Psoas muscle (tissue), 8 donors: ENCODE measurements at regions of chr19 and their contacts with region 1.

Region 1: GRCh38 chr19:35352448-35353304 is 5.0 kb downstream of the FFAR1 start:
- DNase-seq: peak in 1 of 2 donors; percentile 46
- ATAC-seq: peak in 2 of 4 donors; percentile 34 to 63
- H3K4me3 ChIP-seq: no peak overlapping the region
- H3K27ac ChIP-seq: no peak overlapping the region
- H3K4me1 ChIP-seq: no peaks in the 10 kb centered on the region
- H3K27me3 ChIP-seq: peaks cover 0 to 53% (median 6%) of the 10 kb centered on the region in 3 donors
- CTCF ChIP-seq: peak; percentile 55

Region 2: DNA sequence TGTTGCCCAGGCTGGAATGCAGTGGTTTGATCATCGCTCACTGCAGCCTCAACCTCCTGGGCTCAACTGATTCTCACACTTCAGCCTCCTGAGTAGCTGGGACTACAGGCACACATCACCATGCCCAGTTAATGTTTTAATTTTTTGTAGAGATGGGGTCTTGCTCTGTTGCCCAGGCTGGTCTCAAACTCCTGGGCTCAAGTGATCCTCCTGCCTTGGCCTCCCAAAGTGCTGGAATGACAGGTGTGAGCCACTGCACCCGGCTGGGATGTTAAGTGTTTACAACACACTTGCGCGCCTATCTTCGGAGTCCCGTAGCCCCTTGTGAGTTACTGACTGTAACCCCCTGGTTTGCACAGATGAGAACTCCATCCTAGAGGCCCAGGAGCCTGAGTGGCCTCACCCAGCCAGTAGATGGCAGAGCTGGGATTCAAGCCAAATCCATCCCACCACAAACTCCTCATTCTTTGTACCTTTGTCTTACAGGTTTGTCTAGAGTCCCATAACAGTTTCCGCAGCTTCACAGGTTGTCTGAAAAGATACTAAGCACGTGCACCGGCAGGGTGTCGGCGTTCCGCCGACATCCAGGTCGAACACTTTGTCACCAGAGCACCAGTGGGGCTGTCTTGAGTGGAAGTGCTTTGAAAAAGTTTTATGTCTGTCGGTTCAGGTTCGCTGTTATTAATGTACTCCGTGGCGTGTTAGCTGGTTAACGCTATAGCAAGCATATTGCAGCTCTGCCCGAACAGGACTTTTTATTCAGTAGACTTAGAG is 46.0 kb before region 1 on chr19:
- intact Hi-C with region 1: no loop called
- DNase-seq: no peak
- ATAC-seq: no peak
- H3K4me3 ChIP-seq: no peak overlapping the region
- H3K27ac ChIP-seq: no peak overlapping the region
- H3K4me1 ChIP-seq: no peaks in the 10 kb centered on the region
- H3K27me3 ChIP-seq: peaks cover 0 to 25% (median 6%) of the 10 kb centered on the region in 3 donors
- CTCF ChIP-seq: no peak

Region 3: DNA sequence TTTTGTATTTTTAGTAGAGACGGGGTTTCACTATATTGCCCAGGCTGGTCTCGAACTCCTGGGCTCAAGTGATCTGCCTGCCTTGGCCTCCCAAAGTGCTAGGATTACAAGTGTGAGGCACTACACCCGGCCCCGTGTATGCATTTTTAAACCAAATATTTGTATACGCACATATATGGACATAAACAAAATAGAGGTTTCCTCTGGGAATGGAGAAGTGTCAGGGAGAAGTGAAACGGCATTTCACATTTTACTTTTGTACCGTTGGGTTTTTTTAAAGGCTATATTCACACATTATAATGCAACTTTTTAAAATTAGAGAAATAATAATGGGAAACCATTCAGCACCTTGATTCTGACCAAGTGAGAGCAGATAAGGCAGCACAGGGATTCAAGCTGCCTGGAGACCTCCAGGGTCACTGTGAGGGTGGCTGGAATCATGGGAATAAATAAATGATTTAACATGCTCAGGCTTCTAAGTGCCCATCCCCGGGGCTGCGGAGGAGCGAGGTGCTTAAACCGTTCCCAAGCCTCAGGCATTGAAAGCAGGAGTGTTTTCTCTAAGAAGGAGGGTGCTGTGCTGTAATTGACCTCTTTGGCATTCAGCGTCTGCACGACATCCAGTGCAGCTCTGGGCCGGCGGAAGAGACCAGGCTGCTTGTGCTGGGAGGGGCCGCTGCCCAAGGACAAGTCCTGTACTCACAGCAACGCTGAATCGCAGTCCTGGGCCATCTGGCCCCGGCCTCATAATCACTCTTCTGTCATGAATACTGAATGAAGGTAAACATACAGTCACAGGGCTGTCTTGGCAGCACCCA is 42.9 kb after region 1 on chr19:
- intact Hi-C with region 1: no loop called
- DNase-seq: no peak
- ATAC-seq: no peak
- H3K4me3 ChIP-seq: no peak overlapping the region
- H3K27ac ChIP-seq: no peak overlapping the region
- H3K4me1 ChIP-seq: no peaks in the 10 kb centered on the region
- H3K27me3 ChIP-seq: peaks cover 0 to 5% (median 2%) of the 10 kb centered on the region in 3 donors
- CTCF ChIP-seq: no peak

Region 4: DNA sequence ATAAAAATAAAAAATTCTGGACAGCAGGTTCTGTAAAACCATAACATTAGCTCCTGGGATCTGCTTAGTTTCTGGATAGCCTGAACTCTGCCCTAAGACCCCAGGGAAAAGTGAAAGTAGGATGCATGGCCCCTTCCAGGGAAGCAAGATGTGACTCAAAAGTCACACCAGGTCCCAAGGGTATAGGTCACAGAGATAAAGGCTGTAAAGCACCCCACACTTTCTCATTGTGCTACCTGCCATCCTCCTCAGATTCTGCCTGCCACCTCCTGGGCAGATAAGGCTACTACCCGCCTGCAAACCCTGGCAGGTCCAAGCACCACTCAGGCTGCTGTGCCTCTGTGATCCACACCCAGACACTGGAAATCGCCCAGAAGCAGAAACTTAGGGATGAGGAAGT is 116.0 kb after region 1 on chr19:
- intact Hi-C with region 1: loop called (anchors 10 kb)
- DNase-seq: no peak
- ATAC-seq: no peak
- H3K4me3 ChIP-seq: no peak overlapping the region
- H3K27ac ChIP-seq: no peak overlapping the region
- H3K4me1 ChIP-seq: no peaks in the 10 kb centered on the region
- H3K27me3 ChIP-seq: peaks cover 0 to 6% (median 0%) of the 10 kb centered on the region in 3 donors
- CTCF ChIP-seq: peak; percentile 41

Region 5: DNA sequence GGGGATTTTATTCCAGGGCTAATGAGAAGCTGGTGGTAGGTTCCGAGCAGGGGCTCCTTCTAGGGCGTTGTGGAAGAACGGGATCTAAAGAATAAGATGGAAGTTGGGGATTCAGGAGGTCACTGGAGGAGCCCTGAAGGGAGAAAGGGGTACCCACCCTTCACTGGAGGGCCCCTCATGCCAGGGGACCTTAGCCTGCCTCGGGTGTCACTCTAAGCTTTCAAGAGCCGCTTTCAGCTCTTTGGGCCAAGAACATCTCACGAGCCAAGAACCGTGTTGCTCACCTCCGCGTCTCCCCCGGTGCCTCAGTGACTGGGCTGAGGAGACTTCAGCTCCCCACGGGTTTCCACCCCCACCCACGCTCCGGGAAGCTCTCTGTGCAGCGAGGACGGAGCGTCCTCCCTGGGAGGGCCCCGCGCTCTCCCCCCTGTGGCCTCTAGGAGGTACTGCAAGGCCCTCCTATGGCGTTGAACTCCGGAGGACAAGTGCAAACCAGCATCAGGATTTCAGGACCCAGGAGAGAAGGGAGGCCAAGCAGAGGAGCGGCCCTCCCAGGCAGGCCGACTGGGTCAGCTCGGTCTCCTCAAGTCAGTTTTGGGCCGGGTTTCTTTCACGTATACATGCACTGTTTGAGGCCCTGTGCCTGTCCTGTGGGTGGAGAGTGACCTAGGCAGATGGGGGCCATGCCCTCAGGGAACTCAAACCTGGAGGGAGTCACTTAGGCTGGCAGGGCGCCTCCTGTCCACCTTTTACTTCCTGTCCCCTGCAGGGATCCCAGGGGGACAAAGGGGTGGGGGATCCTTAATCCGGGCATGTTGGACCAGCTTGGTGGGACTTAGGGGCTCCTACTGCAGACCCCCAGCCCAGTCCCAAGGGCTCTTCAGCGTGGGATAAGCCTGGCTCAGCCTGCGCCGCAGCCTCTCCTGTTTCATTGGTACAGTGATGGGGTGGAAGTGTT is 142.7 kb after region 1 on chr19:
- intact Hi-C with region 1: loop called (anchors 2 to 10 kb)
- DNase-seq: peak; percentile 57 to 78
- ATAC-seq: peak; percentile 79 to 91 (median 85)
- H3K4me3 ChIP-seq: no peak overlapping the region
- H3K27ac ChIP-seq: no peak overlapping the region
- H3K4me1 ChIP-seq: peaks cover 3% of the 10 kb centered on the region
- H3K27me3 ChIP-seq: peaks cover 0 to 4% (median 0%) of the 10 kb centered on the region in 3 donors
- CTCF ChIP-seq: peak; percentile 89

Region 6: GRCh38 chr19:35545001-35545911 is 192.6 kb after region 1 on chr19 and contains the start of gene TMEM147:
- intact Hi-C with region 1: no loop called
- DNase-seq: peak; percentile 97
- ATAC-seq: peak; percentile 98 to 99 (median 99)
- H3K4me3 ChIP-seq: peak within 1 kb of the TSS; percentile 79
- H3K27ac ChIP-seq: peak within 1 kb of the TSS; percentile 90
- H3K4me1 ChIP-seq: peaks cover 27% of the 10 kb centered on the region
- H3K27me3 ChIP-seq: no peaks in the 10 kb centered on the region
- CTCF ChIP-seq: no peak
- total RNA-seq, gene TMEM147: 77.1 to 103 (median 85.5) TPM